ENCODE measurements at regions of chr13 and their contacts with region 1.

Region 1: DNA sequence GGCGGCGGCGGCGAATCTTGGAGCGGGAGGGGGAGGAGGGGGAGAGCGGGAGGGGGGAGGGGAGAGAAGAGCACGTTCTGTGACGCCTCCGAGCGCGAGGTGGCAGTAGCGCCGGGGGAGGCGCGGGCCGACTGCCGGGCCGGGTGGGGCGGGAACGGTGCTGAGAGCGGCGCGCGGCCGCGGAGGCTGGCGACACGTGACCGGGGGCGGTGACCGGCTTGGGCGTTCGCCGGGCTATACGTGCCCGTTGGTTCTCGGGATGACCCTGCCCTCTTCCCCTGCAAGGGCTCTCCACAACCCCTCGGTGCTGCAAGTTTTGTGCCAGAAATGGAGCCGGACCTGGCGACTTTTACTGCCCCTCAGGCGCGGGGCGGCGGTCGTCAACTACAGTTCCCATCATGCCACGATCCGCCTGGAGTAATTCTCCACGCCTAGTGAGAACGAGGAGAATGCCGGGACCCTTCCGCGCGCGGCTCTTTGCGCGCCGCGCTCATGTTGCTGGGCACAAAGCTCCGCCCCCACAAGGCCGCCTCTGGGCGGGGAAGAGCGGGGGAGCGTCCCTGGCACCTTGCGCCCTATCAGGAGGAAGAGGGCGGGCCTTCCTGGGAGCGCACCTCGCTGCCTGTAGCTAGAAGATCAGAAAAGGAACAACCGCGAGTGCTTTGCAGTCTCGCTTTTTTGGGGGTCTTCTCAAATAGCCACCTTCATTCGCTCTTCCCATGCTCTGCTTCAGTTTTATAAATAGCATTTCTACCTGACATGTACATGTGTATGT is at the start of gene KPNA3:
- DNase-seq: peak; percentile 94 to 99
- H3K4me3 ChIP-seq: peak within 1 kb of the TSS; percentile 75
- CTCF ChIP-seq: no peak
- POLR2A ChIP-seq: no peak
- total RNA-seq, gene KPNA3: 17.7 to 25.0 (median 24.8) TPM

Region 2: GRCh38 chr13:48346583-48346982 is 1446.2 kb before region 1 on chr13:
- intact Hi-C with region 1: loop called (anchors 5 kb)
- DNase-seq: no peak
- H3K4me3 ChIP-seq: no peak overlapping the region
- CTCF ChIP-seq: no peak
- POLR2A ChIP-seq: no peak

Measured in lower leg skin (tissue), 4 donors.